Posterior vena cava (tissue), 2 donors: ENCODE measurements at regions of chr2 and their contacts with region 1.

Region 1: GRCh38 chr2:169119126-169119770 is 49.9 kb downstream of the DHRS9 start:
- DNase-seq: no peak

Region 2: DNA sequence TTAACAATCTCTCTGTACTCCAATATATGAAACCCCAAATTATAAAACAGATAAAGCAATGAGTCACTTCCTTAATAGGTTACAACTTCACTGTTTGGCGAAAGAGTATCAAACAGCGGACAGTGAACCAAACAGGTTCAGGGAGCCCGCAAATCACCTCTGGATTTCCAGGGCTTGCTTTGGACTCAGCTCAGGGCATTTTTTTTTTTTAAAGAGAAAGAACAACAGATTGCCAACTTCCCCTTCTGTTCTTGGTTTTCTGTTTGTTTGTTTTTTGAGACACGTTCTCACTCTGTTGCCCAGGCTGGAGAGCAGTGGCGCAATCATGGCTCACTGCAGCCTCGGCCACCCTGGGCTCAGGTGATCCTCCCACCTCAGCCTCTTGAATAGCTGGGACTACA is 140.8 kb before region 1 on chr2:
- intact Hi-C with region 1: no loop called
- DNase-seq: no peak

Region 3: GRCh38 chr2:169173876-169174275 is 54.6 kb after region 1 on chr2:
- intact Hi-C with region 1: loop called in 1 of 2 experiments (anchors 2 kb)
- DNase-seq: no peak

Region 4: GRCh38 chr2:169184074-169184473 is 64.8 kb after region 1 on chr2:
- intact Hi-C with region 1: no loop called
- DNase-seq: no peak